Right lobe of liver (tissue), 6 donors: ENCODE measurements at regions of chr10 and their contacts with region 1.

Region 1: GRCh38 chr10:97869091-97870042 is 19.7 kb downstream of the GOLGA7B start:
- DNase-seq: peak; percentile 85 to 86 (median 86)
- ATAC-seq: peak; percentile 94 to 99 (median 97)
- H3K4me3 ChIP-seq: no peak overlapping the region
- H3K27ac ChIP-seq: no peak overlapping the region
- H3K4me1 ChIP-seq: no peaks in the 10 kb centered on the region
- H3K27me3 ChIP-seq: no peaks in the 10 kb centered on the region
- CTCF ChIP-seq: peak; percentile 57 to 95 (median 70)
- POLR2A ChIP-seq: no peak

Region 2: GRCh38 chr10:97792141-97792721 is 77.1 kb before region 1 on chr10:
- intact Hi-C with region 1: loop called in 1 of 2 experiments (anchors 5 kb)
- DNase-seq: peak; percentile 71 to 75 (median 73)
- ATAC-seq: peak; percentile 78 to 90 (median 85)
- H3K4me3 ChIP-seq: no peak overlapping the region
- H3K27ac ChIP-seq: no peak overlapping the region
- H3K4me1 ChIP-seq: no peaks in the 10 kb centered on the region
- H3K27me3 ChIP-seq: no peaks in the 10 kb centered on the region
- CTCF ChIP-seq: peak; percentile 81 to 91 (median 87)
- POLR2A ChIP-seq: no peak

Region 3: DNA sequence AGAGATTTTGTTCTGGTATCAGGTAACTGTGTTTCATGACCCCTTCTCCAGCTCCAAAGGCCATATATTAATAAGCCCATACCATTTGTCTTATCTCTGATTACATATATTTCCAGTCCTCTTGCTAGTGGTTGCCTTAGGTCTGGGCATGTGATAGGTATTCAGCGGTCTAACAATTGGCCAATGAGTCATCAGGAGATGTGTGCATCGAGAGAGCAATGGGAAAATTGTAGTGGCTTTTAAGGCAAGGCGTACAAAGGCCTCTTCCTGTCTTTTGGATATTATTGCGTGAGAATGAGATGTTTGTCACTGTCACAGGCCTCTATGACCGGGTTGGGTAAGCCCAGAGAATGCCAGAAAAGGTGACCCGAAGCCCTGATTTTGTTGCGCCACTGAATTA is 58.9 kb before region 1 on chr10:
- intact Hi-C with region 1: no loop called
- DNase-seq: no peak
- ATAC-seq: no peak
- H3K4me3 ChIP-seq: no peak overlapping the region
- H3K27ac ChIP-seq: no peak overlapping the region
- H3K4me1 ChIP-seq: no peaks in the 10 kb centered on the region
- H3K27me3 ChIP-seq: no peaks in the 10 kb centered on the region
- CTCF ChIP-seq: no peak
- POLR2A ChIP-seq: no peak